A549 (cell line): ENCODE measurements at regions of chrX and their contacts with region 1.

Region 1: DNA sequence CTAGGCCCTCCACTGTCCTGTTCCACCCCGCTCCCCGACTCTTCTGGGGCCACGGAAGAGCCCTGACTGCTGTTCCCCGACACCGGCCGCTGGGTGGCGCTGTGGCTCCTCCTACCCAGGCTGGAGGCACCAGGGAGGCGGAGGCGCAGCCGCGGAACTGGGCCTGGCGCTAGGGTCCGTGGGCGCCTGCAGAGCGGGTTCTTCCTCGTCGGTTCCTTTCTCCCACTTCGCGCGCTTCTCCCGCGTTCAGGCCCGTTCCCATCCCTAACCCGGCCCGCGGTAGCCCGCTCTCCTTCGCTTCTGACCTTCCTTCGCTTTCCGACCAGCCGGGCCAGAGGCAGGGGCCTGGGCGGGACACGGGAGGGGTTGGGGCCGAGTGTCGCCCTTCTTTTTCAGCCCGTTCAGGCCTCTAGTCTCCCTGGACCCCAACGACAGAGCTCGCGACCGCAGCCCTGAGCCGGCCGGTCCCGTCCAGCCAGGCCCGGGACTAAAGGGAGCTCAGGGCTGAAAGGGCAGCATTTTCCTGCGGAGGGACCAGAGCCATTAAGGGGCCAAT is 34.3 kb downstream of the NALF2 start:
- DNase-seq: peak; percentile 61 to 70
- ATAC-seq: peak; percentile 99 to 100
- H3K4me3 ChIP-seq: peak overlapping the region; percentile 55
- H3K27ac ChIP-seq: peak overlapping the region; percentile 74 to 87
- H3K4me1 ChIP-seq: no peaks in the 10 kb centered on the region
- CTCF ChIP-seq: peak; percentile 68
- EP300 ChIP-seq: no peak
- POLR2A ChIP-seq: no peak
- RAD21 ChIP-seq: peak; percentile 75 to 83

Region 2: DNA sequence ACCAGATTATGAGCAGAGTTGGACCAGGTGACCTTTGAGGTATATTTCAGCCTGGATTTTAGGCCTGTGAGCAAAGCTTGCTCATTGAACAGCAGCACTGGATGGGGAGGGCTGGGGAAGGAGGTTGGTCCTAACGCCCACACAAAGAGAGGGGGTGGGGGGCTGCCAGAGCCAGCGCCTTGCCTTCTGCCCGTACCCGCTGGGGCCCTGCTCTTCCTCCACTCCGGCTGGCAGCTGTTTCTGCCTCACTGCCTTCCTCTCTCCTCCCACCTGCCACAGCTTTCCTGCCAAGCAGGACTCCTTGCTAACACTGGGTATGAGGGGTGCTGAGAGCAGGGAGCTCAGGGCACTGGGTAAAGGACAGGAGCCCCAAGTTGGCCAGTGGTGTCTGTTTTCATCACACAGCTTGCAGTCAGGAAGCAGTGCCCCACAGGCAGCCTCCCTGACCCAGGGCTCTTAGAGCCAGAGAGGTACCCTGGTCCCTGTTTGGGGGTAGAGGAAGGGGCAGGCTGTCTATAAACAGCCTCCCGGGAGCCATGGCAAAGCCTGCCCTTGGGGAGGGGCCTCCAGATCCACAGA is 28.2 kb before region 1 on chrX:
- CTCF ChIA-PET with region 1: interaction called, 10 read pairs
- POLR2A ChIA-PET with region 1: no interaction called
- DNase-seq: no peak
- ATAC-seq: no peak
- H3K4me3 ChIP-seq: no peak overlapping the region
- H3K27ac ChIP-seq: no peak overlapping the region
- H3K4me1 ChIP-seq: no peaks in the 10 kb centered on the region
- CTCF ChIP-seq: no peak
- EP300 ChIP-seq: no peak
- POLR2A ChIP-seq: no peak
- RAD21 ChIP-seq: no peak

Region 3: DNA sequence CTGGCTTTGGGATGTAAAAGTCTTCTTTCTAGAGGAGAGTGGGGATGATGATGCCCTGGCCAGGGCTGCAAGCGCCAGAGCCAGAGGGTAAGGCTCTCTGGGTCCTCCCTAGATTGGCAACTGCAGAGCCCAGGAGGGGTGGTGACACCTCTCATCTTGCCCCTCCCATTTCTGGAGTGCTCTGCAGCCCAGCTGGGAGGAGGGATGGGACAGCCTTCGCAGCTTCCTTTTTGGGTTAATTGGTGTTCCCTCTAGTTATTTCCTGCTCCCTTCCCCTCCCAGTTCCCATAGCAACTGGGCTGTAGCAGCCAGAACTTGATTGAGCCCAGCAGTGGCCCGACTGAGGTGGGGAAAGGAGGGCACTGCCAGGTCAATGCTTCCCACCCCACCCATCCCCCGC is 15.1 kb before region 1 on chrX:
- CTCF ChIA-PET with region 1: interaction called, 18 read pairs
- POLR2A ChIA-PET with region 1: no interaction called
- DNase-seq: no peak
- ATAC-seq: no peak
- H3K4me3 ChIP-seq: no peak overlapping the region
- H3K27ac ChIP-seq: no peak overlapping the region
- H3K4me1 ChIP-seq: 0 out of 3 replicates have a peak, but pooled peaks cover 7% of the 10 kb centered on the region
- CTCF ChIP-seq: no peak
- EP300 ChIP-seq: no peak
- POLR2A ChIP-seq: no peak
- RAD21 ChIP-seq: no peak

Region 4: GRCh38 chrX:69618803-69619202 is 80.4 kb after region 1 on chrX:
- CTCF ChIA-PET with region 1: interaction called, 14 read pairs
- POLR2A ChIA-PET with region 1: no interaction called
- DNase-seq: peak in 1 of 2 experiments; percentile 31
- ATAC-seq: no peak
- H3K4me3 ChIP-seq: no peak overlapping the region
- H3K27ac ChIP-seq: no peak overlapping the region
- H3K4me1 ChIP-seq: 0 out of 3 replicates have a peak, but pooled peaks cover 3% of the 10 kb centered on the region
- CTCF ChIP-seq: peak; percentile 51
- EP300 ChIP-seq: no peak
- POLR2A ChIP-seq: no peak
- RAD21 ChIP-seq: peak; percentile 42 to 50; a peak in 4 of 5 replicates

Region 5: GRCh38 chrX:70030301-70030767 is 491.9 kb after region 1 on chrX:
- CTCF ChIA-PET with region 1: interaction called, 22 read pairs
- POLR2A ChIA-PET with region 1: no interaction called
- DNase-seq: peak; percentile 51 to 61
- ATAC-seq: peak; percentile 77 to 89
- H3K4me3 ChIP-seq: no peak overlapping the region
- H3K27ac ChIP-seq: no peak overlapping the region
- H3K4me1 ChIP-seq: no peaks in the 10 kb centered on the region
- CTCF ChIP-seq: no peak; the same call in 1 of the 3 replicates
- EP300 ChIP-seq: no peak
- POLR2A ChIP-seq: no peak
- RAD21 ChIP-seq: peak; percentile 63 to 65

Region 6: GRCh38 chrX:70096052-70096451 is 557.7 kb after region 1 on chrX:
- CTCF ChIA-PET with region 1: interaction called, 28 read pairs
- POLR2A ChIA-PET with region 1: no interaction called
- DNase-seq: peak in 1 of 2 experiments; percentile 37
- ATAC-seq: peak; percentile 43 to 70; a peak in 2 of 6 replicates
- H3K4me3 ChIP-seq: no peak overlapping the region
- H3K27ac ChIP-seq: no peak overlapping the region
- H3K4me1 ChIP-seq: no peaks in the 10 kb centered on the region
- CTCF ChIP-seq: peak; percentile 16; the same call in 1 of the 3 replicates
- EP300 ChIP-seq: no peak
- POLR2A ChIP-seq: no peak
- RAD21 ChIP-seq: peak; percentile 27 to 52; a peak in 4 of 5 replicates